Activated T-helper 2 cell treated with anti-CD3 and anti-CD28 coated beads, Interferon-gamma antibody, Interleukin-2, Interleukin-4, amounts not matched to agents 10 μg/mL and 5 μg/mL and 100 μg/mL, durations not matched to agents 14 hours and 24 hours and 36 hours (primary cell): ENCODE measurements at regions of chr2 and their contacts with region 1.

Region 1: DNA sequence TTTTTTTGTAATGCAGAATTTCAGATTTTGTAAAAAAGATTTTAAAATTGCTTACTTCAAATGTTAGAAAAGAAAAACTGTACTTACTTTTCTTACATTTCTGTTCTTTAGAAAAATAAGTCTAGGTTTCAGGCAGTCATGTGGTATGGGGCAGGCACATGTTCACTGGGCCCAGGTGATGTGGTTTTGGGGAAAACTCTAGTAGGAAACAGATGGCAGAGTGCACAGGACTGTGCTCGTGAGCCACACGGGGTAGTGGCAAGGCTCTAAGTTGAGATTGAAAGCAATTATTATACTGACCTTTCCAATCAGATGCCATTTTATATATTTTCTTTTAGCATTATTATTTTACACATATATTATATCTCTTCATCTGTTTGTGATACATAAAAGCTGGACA is 1036.9 kb upstream of the TMEFF2 start:
- DNase-seq: no peak
- H3K4me3 Mint-ChIP-seq: no peak overlapping the region
- H3K27ac Mint-ChIP-seq: no peak overlapping the region
- H3K4me1 Mint-ChIP-seq: no peaks in the 10 kb centered on the region
- H3K27me3 Mint-ChIP-seq: no peaks in the 10 kb centered on the region

Region 2: GRCh38 chr2:193201583-193201982 is 30.1 kb before region 1 on chr2:
- intact Hi-C with region 1: loop called (anchors 2 kb)
- DNase-seq: no peak
- H3K4me3 Mint-ChIP-seq: no peak overlapping the region
- H3K27ac Mint-ChIP-seq: no peak overlapping the region
- H3K4me1 Mint-ChIP-seq: no peaks in the 10 kb centered on the region
- H3K27me3 Mint-ChIP-seq: no peaks in the 10 kb centered on the region